H1 (cell line): ENCODE measurements at regions of chr17 and their contacts with region 1.

Region 1: DNA sequence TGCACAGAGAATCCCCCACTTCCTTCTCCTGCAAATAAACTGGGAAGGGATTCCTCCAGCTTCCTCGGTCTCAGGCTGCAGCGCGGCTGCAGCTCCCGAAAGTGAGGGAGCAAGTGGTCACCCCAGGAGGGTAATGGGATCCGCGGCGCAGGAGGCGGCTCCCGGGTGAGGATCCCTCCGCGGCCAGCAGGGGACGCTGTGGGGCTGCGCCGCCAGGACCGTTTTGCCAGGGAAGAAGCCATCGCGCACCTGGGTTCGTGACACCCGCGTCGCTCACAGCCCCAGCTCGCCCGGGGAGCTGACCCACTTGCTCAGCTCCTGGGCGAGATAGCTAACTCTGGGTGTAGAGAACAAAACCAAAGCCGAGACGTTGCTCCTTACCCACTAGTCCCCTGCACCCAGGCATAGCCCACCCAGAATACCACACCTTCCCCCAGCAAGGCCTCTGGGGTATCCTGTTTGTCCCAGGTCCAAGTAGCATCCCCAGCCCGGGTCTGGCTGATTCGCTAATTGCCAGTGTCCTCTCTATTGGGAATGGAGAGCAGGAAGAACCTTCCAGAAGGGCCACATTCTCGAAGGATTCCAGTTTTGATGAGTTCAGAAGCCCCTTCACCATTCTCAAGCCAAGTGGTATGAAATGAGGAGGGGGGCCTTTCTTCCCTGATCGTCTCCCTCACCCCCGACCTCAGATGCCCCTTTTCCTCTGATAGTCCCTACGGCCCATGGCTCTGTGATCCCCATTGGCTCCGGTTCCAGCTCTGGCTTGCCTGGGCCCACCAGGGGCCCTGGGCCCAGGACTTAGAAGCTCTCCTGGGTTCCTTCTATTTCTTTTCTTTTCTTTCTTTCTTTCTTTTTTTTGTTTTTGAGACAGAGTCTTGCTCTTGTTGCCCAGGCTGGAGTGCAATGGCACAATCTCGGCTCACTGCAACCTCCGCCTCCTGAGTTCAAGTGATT is 14.1 kb downstream of the CYGB start:
- DNase-seq: peak; percentile 49 to 96
- H3K4me3 ChIP-seq: no peak overlapping the region
- H3K27ac ChIP-seq: no peak overlapping the region
- H3K4me1 ChIP-seq: peaks cover 0 to 19% (median 10%) of the 10 kb centered on the region in 4 experiments; a peak in 6 of 7 replicates
- H3K27me3 ChIP-seq: peaks cover 0 to 5% (median 0%) of the 10 kb centered on the region in 4 experiments; a peak in 3 of 7 replicates
- CTCF ChIP-seq: peak; percentile 97 to 99 (median 99)
- EP300 ChIP-seq: peak in 1 of 2 experiments; percentile 43; a peak in 1 of 3 replicates
- POLR2A ChIP-seq: no peak
- RAD21 ChIP-seq: peak; percentile 91 to 92

Region 2: DNA sequence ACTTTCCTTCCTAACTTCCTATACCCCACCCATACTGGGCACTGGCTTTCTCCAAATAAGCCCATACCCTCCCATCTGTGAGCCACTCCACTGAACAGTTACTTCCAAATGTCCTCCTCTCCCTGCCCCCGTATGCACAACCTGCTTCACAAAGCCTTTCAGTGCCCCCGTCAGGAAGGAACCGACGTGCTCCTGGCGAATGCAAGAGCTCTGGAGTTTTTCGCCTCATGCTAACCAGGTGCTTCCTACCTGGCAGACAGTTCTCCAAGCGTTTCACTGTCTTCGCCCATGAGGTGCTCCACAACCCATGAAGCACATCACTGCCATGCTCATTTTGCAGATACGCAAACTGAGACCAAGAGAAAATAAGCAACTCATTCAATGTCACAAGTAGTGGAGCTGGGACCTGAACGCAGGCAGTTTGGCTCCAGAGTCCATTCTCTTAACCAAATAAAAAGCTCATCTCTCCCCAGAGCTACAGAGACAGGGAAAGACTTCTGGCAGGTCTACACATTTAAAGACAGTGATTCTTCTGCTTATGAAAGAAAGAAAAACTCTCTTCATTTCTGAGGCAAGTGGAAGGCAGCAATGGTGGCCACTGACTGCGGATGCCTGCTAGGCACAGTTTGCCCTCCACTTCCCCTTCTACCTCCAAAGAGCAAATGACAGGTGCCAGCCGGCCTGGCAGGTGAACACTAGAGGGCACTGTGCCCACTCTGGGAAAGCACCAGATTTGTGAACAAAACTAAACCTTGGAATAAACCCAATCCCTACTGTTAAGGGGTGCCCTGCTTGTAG is 115.1 kb before region 1 on chr17:
- CTCF ChIA-PET with region 1: no interaction called
- POLR2A ChIA-PET with region 1: no interaction called
- DNase-seq: peak in 1 of 2 experiments; percentile 88
- H3K4me3 ChIP-seq: no peak overlapping the region
- H3K27ac ChIP-seq: no peak overlapping the region
- H3K4me1 ChIP-seq: no peaks in the 10 kb centered on the region; a peak in 2 of 7 replicates
- H3K27me3 ChIP-seq: no peaks in the 10 kb centered on the region
- CTCF ChIP-seq: peak; percentile 83 to 88 (median 87)
- EP300 ChIP-seq: no peak
- POLR2A ChIP-seq: no peak
- RAD21 ChIP-seq: peak; percentile 80 to 83

Region 3: GRCh38 chr17:76501018-76501826 is 22.1 kb before region 1 on chr17 and contains the start of gene RHBDF2:
- CTCF ChIA-PET with region 1: interaction called, 136 read pairs
- POLR2A ChIA-PET with region 1: no interaction called
- DNase-seq: peak; percentile 65 to 100
- H3K4me3 ChIP-seq: peak within 1 kb of the TSS; percentile 62 to 82 (median 76)
- H3K27ac ChIP-seq: no peak within 1 kb of the TSS
- H3K4me1 ChIP-seq: peaks cover 11 to 43% (median 34%) of the 10 kb centered on the region in 4 experiments
- H3K27me3 ChIP-seq: no peaks in the 10 kb centered on the region
- CTCF ChIP-seq: no peak
- EP300 ChIP-seq: no peak
- POLR2A ChIP-seq: peak in 1 of 2 experiments; percentile 71; a peak in 2 of 3 replicates
- RAD21 ChIP-seq: no peak
- total RNA-seq, gene RHBDF2: 25.9 and 26.2 TPM in 2 replicates

Region 4: DNA sequence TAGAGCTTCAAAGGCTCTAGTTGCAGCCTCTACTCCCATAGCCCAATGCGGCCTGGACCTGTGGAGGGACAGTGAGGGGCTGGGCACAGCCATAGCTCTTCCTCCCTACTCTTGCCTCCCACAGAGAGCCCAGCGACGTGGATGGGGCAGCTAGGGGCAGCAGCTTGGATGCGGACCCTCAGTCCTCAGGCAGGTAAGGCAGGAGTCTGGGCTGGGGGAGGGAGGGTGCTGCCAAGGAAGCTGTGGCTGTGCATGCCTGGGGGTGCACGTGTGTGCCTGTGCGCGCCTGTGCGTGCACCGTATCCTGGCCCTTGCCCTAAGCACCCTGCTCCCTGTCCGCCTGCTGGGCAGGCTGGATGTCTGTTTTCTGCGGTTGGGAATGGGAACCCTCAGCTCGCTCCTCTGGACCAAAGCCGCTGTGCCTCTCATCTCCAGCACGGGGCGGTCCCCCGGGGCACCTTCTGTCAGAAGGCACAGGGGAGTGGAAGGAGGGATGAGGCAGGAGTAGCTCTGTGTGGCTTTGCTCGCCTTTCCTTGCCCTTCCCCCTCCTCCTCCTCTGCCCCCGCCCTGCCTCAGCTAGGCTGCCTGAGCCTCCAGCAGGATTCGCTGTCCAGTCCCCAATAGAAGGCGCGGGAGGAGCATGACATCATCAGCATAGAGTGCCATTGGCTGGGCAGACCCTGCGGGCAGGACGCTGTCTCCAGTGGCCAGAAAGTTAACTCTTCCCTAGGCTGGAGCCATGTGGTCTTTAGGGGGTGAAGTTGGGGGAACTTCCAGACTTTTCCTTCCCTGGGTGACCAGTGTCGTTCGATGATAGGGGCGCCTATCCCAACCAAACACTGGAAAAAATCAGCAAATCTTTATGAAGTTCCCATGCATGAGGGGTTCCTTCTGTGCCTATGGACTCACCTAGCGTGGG is 17.3 kb after region 1 on chr17:
- CTCF ChIA-PET with region 1: interaction called, 260 read pairs
- POLR2A ChIA-PET with region 1: interaction called, 30 read pairs
- DNase-seq: peak; percentile 88 to 92
- H3K4me3 ChIP-seq: peak overlapping the region; percentile 12 to 50 (median 32); a peak in 7 of 8 replicates
- H3K27ac ChIP-seq: no peak overlapping the region
- H3K4me1 ChIP-seq: peaks cover 0 to 27% (median 16%) of the 10 kb centered on the region in 4 experiments; a peak in 6 of 7 replicates
- H3K27me3 ChIP-seq: peaks cover 8 to 42% (median 35%) of the 10 kb centered on the region in 4 experiments
- CTCF ChIP-seq: peak in 1 of 3 experiments; percentile 28; a peak in 1 of 4 replicates
- EP300 ChIP-seq: no peak
- POLR2A ChIP-seq: no peak
- RAD21 ChIP-seq: no peak

Region 5: GRCh38 chr17:76640546-76641380 is 117.4 kb after region 1 on chr17:
- CTCF ChIA-PET with region 1: no interaction called
- POLR2A ChIA-PET with region 1: no interaction called
- DNase-seq: no peak
- H3K4me3 ChIP-seq: no peak overlapping the region
- H3K27ac ChIP-seq: no peak overlapping the region
- H3K4me1 ChIP-seq: peaks cover 0 to 5% (median 3%) of the 10 kb centered on the region in 4 experiments; a peak in 3 of 7 replicates
- H3K27me3 ChIP-seq: no peaks in the 10 kb centered on the region
- CTCF ChIP-seq: no peak
- EP300 ChIP-seq: no peak
- POLR2A ChIP-seq: no peak
- RAD21 ChIP-seq: no peak